OCI-LY7 (cell line): ENCODE measurements at regions of chr10 and their contacts with region 1.

Region 1: GRCh38 chr10:75392744-75393143 is 8.8 kb downstream of the ZNF503 start:
- DNase-seq: no peak
- H3K4me3 ChIP-seq: no peak overlapping the region
- H3K27ac ChIP-seq: no peak overlapping the region
- H3K4me1 ChIP-seq: no peaks in the 10 kb centered on the region
- CTCF ChIP-seq: no peak

Region 2: GRCh38 chr10:75350791-75351190 is 42.0 kb before region 1 on chr10:
- CTCF ChIA-PET with region 1: no interaction called
- POLR2A ChIA-PET with region 1: no interaction called
- intact Hi-C with region 1: no loop called
- DNase-seq: no peak
- H3K4me3 ChIP-seq: no peak overlapping the region
- H3K27ac ChIP-seq: no peak overlapping the region
- H3K4me1 ChIP-seq: no peaks in the 10 kb centered on the region
- CTCF ChIP-seq: no peak

Region 3: GRCh38 chr10:75408911-75409885 is 16.5 kb after region 1 on chr10:
- CTCF ChIA-PET with region 1: interaction called, 24 read pairs
- POLR2A ChIA-PET with region 1: no interaction called
- intact Hi-C with region 1: no loop called
- DNase-seq: peak; percentile 37
- H3K4me3 ChIP-seq: peak overlapping the region; percentile 64
- H3K27ac ChIP-seq: no peak overlapping the region
- H3K4me1 ChIP-seq: peaks cover 3% of the 10 kb centered on the region
- CTCF ChIP-seq: no peak